ENCODE measurements at regions of chr3 and their contacts with region 1.

Region 1: GRCh38 chr3:120601554-120601953 is 5.4 kb downstream of the NDUFB4 start:
- DNase-seq: no peak
- CTCF ChIP-seq: no peak

Region 2: DNA sequence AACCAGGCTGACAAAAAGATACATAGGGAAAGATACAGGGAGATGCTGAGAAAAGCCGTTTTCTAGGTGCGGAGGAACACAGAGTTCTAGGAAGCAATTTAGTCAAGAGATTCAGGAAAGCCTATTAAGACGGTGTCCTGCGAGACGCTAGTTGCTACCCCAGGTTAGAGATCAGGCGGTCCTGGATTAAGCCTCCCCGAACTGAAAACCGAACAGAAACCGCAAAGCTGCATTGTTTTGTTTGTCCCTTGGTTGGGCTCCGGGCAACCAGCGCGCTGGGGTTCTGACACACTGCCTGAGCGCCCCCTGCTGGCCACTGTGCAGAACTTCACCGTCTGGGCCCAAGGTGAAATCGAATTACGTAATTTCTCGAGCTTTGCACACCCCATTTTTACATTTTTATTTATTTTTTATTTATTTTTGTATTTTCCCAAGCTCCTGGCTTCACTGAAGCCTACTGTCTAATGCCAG is 42.7 kb before region 1 on chr3:
- CTCF ChIA-PET with region 1: interaction called, 20 read pairs
- POLR2A ChIA-PET with region 1: no interaction called
- DNase-seq: peak; percentile 82
- CTCF ChIP-seq: peak; percentile 99

Region 3: DNA sequence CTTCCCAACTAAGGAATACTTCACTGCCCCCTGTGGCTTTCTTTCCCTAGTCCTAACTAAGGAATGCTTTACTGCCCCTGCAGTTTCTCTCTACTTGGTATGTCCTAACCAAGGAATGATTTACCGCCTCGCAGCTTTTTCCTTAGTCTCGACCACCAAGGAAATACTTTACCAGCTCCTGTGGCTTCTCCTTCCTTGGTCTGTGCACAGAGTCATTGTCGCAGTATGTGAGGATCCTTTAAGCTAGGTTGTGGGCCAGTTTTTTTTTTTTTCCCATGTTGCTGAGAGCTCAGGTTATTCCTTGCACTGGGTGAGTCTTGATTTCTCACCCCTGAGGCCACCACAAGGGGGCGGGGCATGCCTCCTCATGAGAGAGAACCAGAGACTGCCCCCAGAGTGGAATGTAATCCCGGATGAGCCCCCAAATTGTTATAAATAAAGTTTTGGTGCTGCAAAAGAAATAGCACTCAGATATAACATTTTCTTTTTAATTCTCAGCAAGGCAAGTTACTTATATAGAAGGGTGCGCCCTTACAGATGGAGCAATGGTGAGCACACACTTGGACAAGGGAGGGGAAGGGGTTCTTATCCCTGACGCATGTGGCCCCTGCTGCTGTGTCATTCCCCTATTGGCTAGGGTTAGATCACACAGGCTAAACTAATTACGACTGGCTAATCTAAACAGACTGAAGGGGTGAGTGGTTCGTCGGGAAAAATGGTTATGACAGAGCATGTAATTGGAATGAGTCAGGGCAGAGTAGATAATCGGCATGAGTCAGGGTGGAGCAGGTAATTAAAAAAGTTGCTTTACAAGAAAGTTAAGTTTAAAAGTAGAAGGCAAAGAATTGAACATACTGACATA is 21.5 kb after region 1 on chr3:
- CTCF ChIA-PET with region 1: no interaction called
- POLR2A ChIA-PET with region 1: no interaction called
- DNase-seq: no peak
- CTCF ChIP-seq: no peak